H1 (cell line): ENCODE measurements at regions of chr20 and their contacts with region 1.

Region 1: DNA sequence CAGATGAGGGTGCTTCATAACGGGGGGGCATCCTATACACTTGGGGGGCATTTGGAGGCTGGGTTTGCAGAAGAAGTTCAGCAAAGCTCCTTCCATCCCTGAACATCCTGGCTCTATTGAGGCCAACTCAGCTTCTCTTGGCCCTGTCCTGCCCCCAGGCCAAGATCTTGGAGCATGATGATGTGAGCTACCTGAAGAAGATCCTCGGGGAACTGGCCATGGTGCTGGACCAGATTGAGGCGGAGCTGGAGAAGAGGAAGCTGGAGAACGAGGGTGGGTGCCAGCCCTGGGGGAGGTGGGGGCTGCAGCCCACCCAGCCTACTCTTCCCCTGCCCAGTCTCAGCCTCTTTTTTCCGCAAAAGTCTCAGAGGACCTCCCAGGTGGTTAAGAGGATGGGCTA is 17.2 kb downstream of the GDAP1L1 start:
- DNase-seq: no peak
- H3K4me3 ChIP-seq: no peak overlapping the region
- H3K27ac ChIP-seq: no peak overlapping the region
- H3K4me1 ChIP-seq: no peaks in the 10 kb centered on the region; a peak in 1 of 7 replicates
- H3K27me3 ChIP-seq: no peaks in the 10 kb centered on the region
- CTCF ChIP-seq: no peak
- EP300 ChIP-seq: no peak
- POLR2A ChIP-seq: no peak
- RAD21 ChIP-seq: no peak

Region 2: GRCh38 chr20:44137210-44137801 is 127.0 kb before region 1 on chr20:
- CTCF ChIA-PET with region 1: no interaction called
- POLR2A ChIA-PET with region 1: no interaction called
- DNase-seq: peak; percentile 25 to 55
- H3K4me3 ChIP-seq: peak overlapping the region in 1 of 4 experiments; percentile 31; a peak in 1 of 8 replicates
- H3K27ac ChIP-seq: 0 out of 2 replicates have a peak overlapping the region, but pooled peaks have one; percentile 28
- H3K4me1 ChIP-seq: peaks cover 0 to 4% (median 2%) of the 10 kb centered on the region in 4 experiments; a peak in 3 of 7 replicates
- H3K27me3 ChIP-seq: no peaks in the 10 kb centered on the region
- CTCF ChIP-seq: no peak
- EP300 ChIP-seq: no peak
- POLR2A ChIP-seq: no peak
- RAD21 ChIP-seq: no peak

Region 3: DNA sequence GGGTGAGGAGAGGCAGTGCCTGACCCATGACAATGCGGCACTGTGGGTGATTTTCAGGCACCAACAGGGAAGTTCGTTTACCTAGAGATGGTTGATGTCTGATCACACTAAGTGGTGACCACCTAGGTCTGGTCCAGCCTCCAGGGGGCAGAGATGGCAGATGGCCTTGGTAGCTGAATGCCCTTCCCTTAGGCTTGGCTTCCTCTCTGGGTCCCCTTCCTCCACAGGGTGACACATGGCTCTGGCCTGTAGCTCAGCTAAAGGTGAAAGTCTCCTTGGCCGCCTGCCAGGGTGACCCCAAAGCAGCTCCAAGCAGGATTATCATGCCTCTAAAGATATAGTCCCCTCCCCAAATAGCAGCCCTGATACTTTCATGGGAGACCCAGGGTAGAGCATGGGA is 10.8 kb before region 1 on chr20:
- CTCF ChIA-PET with region 1: interaction called, 31 read pairs
- POLR2A ChIA-PET with region 1: interaction called, 3 read pairs
- DNase-seq: no peak
- H3K4me3 ChIP-seq: no peak overlapping the region
- H3K27ac ChIP-seq: no peak overlapping the region
- H3K4me1 ChIP-seq: peaks cover 0 to 7% (median 1%) of the 10 kb centered on the region in 4 experiments; a peak in 4 of 7 replicates
- H3K27me3 ChIP-seq: no peaks in the 10 kb centered on the region; a peak in 1 of 7 replicates
- CTCF ChIP-seq: peak; percentile 42 to 60 (median 48)
- EP300 ChIP-seq: no peak
- POLR2A ChIP-seq: no peak
- RAD21 ChIP-seq: peak in 1 of 2 experiments; percentile 24; a peak in 1 of 4 replicates